Prostate gland (tissue), 2 donors: ENCODE measurements at regions of chr7 and their contacts with region 1.

Region 1: GRCh38 chr7:36967387-36967786 is 243.1 kb upstream of the AOAH start:
- DNase-seq: no peak
- H3K4me3 ChIP-seq: no peak overlapping the region
- H3K27ac ChIP-seq: no peak overlapping the region
- H3K4me1 ChIP-seq: no peaks in the 10 kb centered on the region
- H3K27me3 ChIP-seq: no peaks in the 10 kb centered on the region
- CTCF ChIP-seq: peak in 3 of 4 experiments; percentile 57 to 66 (median 61)
- POLR2A ChIP-seq: no peak

Region 2: DNA sequence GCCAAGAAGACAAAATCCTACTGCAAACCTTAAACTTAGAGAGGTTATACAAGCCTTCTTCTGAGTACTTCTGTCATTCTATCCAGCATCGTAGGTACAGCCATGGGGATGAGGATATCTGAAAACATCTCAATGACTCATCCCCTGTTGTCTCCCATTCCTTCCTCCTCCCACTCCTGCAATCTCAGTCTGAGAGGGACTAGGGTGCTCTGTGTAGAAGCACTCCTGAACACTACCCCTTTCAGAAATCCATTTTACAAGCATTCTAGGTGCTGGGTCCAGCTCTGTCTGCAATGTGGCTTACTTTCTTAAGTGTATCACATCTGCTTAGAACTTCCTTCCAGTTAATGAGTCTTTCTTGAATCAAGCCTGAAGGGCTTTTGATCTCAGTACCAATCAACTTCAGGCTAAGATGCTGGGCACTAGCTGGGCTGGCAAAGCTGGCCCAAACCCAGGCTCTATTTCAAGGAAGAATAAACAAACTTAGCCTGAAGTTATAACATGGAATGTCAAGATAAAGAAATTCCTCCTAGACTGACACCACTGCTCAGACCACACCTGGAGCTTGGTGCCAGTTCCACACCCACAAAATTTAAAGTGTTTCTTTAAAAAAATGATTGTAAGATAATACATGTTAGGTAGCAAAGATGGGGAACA is 27.2 kb after region 1 on chr7:
- intact Hi-C with region 1: no loop called
- DNase-seq: no peak
- H3K4me3 ChIP-seq: no peak overlapping the region
- H3K27ac ChIP-seq: no peak overlapping the region
- H3K4me1 ChIP-seq: no peaks in the 10 kb centered on the region
- H3K27me3 ChIP-seq: no peaks in the 10 kb centered on the region
- CTCF ChIP-seq: no peak
- POLR2A ChIP-seq: no peak

Region 3: GRCh38 chr7:37181550-37181932 is 214.2 kb after region 1 on chr7:
- intact Hi-C with region 1: loop called (anchors 1 kb)
- DNase-seq: no peak
- H3K4me3 ChIP-seq: no peak overlapping the region
- H3K27ac ChIP-seq: no peak overlapping the region
- H3K4me1 ChIP-seq: no peaks in the 10 kb centered on the region
- H3K27me3 ChIP-seq: no peaks in the 10 kb centered on the region
- CTCF ChIP-seq: no peak
- POLR2A ChIP-seq: no peak